ENCODE measurements at regions of chr21 and their contacts with region 1.

Region 1: DNA sequence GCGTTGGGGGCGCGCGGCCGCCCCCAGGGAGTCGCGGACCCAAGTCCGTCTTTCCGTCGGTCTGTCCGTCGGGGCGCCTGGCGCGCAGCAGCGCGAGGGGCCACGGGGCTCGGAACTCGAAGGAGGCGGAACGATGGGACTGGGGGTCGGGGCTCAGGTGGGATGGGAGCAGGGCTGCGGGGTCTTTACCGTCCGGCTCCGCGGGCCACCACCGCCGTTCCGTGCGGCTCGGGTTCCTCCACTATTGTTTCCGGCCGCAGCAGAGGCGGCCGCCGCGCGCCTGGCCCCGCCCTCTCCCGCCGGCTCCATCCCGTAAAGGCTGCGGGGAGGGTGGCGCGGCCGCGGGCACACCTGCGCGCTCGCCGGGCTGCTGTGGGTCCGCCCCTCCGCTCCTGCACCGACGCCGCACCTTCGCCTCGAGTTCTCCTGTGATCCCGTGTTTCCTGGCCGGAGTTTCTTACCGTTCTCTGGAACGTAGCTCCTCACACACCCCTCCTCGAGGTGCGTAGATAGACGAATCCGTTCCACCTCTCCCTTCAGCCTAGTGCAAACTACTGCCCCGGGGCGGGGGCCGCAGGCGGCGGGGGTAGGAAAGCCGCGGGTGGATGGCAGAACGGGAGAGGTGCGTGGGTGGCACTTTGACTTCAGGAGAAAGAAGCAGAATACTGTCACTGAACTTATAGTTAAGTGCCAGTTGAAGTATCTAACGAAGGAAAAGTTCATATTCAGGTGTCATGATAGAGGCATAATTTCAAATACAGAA is at the start of gene C21orf91:
- DNase-seq: peak; percentile 91
- ATAC-seq: peak; percentile 87
- H3K4me3 Mint-ChIP-seq: peak within 1 kb of the TSS; percentile 85
- H3K27ac Mint-ChIP-seq: peak within 1 kb of the TSS; percentile 100
- H3K4me1 Mint-ChIP-seq: peaks cover 39% of the 10 kb centered on the region
- H3K27me3 Mint-ChIP-seq: no peaks in the 10 kb centered on the region
- total RNA-seq, gene C21orf91: 51.8 to 57.9 TPM

Region 2: GRCh38 chr21:17611414-17612022 is 207.8 kb before region 1 on chr21:
- CTCF ChIA-PET with region 1: interaction called, 3 read pairs
- POLR2A ChIA-PET with region 1: interaction called, 10 read pairs
- DNase-seq: peak; percentile 88
- ATAC-seq: peak; percentile 67
- H3K4me3 Mint-ChIP-seq: peak overlapping the region; percentile 93
- H3K27ac Mint-ChIP-seq: peak overlapping the region; percentile 98
- H3K4me1 Mint-ChIP-seq: peaks cover 63% of the 10 kb centered on the region
- H3K27me3 Mint-ChIP-seq: no peaks in the 10 kb centered on the region

Region 3: GRCh38 chr21:17780539-17780938 is 38.8 kb before region 1 on chr21:
- CTCF ChIA-PET with region 1: interaction called, 12 read pairs
- POLR2A ChIA-PET with region 1: interaction called, 31 read pairs
- DNase-seq: peak; percentile 63
- ATAC-seq: peak; percentile 34
- H3K4me3 Mint-ChIP-seq: peak overlapping the region; percentile 49
- H3K27ac Mint-ChIP-seq: peak overlapping the region; percentile 82
- H3K4me1 Mint-ChIP-seq: peaks cover 90% of the 10 kb centered on the region
- H3K27me3 Mint-ChIP-seq: no peaks in the 10 kb centered on the region

Region 4: GRCh38 chr21:17793246-17794123 is 25.8 kb before region 1 on chr21:
- CTCF ChIA-PET with region 1: interaction called, 20 read pairs
- POLR2A ChIA-PET with region 1: interaction called, 36 read pairs
- DNase-seq: no peak
- ATAC-seq: peak; percentile 74
- H3K4me3 Mint-ChIP-seq: peak overlapping the region; percentile 73
- H3K27ac Mint-ChIP-seq: peak overlapping the region; percentile 89
- H3K4me1 Mint-ChIP-seq: peaks cover 74% of the 10 kb centered on the region
- H3K27me3 Mint-ChIP-seq: no peaks in the 10 kb centered on the region

Region 5: GRCh38 chr21:17925000-17925610 is 105.8 kb after region 1 on chr21:
- CTCF ChIA-PET with region 1: interaction called, 10 read pairs
- POLR2A ChIA-PET with region 1: no interaction called
- DNase-seq: peak; percentile 72
- ATAC-seq: peak; percentile 98
- H3K4me3 Mint-ChIP-seq: no peak overlapping the region
- H3K27ac Mint-ChIP-seq: no peak overlapping the region
- H3K4me1 Mint-ChIP-seq: peaks cover 3% of the 10 kb centered on the region
- H3K27me3 Mint-ChIP-seq: peaks cover 10% of the 10 kb centered on the region